ENCODE measurements at regions of chr13 and their contacts with region 1.

Region 1: DNA sequence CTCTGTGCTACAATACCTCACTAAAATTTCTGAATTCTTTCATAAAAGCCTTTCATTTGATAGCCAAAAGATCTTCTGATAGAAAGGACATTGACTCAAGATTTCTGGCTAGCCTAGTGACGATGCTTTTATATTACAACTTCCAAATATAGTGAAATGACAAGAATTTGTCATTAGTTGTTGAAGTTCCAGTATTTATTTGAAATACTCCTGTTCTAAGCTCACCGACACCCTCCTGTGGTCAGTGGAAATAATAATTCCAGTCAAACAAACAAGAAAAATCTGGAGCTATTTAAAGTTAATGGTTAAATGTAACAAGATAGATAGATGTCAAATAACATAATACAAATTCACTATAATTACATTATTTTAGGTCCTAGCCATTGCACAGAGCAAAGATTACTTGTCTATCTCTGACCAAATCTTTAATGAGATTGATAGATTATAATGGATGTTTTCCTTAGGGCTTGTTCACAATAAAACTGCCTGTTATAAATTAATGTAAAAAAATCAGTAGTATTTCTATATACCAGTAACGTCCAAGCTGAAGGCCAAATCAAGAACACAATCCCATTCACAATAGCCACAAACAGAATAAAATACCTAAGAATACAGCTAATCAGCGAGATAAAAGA is 195.5 kb downstream of the RGCC start:
- DNase-seq: peak; percentile 34
- H3K4me3 Mint-ChIP-seq: no peak overlapping the region
- H3K27ac Mint-ChIP-seq: no peak overlapping the region
- H3K4me1 Mint-ChIP-seq: peaks cover 8% of the 10 kb centered on the region
- H3K27me3 Mint-ChIP-seq: no peaks in the 10 kb centered on the region
- CTCF ChIP-seq: no peak

Region 2: GRCh38 chr13:41352935-41353840 is 299.7 kb before region 1 on chr13:
- CTCF ChIA-PET with region 1: interaction called, 10 read pairs
- intact Hi-C with region 1: no loop called
- DNase-seq: peak; percentile 24
- H3K4me3 Mint-ChIP-seq: no peak overlapping the region
- H3K27ac Mint-ChIP-seq: no peak overlapping the region
- H3K4me1 Mint-ChIP-seq: peaks cover 8% of the 10 kb centered on the region
- H3K27me3 Mint-ChIP-seq: no peaks in the 10 kb centered on the region
- CTCF ChIP-seq: no peak

Region 3: DNA sequence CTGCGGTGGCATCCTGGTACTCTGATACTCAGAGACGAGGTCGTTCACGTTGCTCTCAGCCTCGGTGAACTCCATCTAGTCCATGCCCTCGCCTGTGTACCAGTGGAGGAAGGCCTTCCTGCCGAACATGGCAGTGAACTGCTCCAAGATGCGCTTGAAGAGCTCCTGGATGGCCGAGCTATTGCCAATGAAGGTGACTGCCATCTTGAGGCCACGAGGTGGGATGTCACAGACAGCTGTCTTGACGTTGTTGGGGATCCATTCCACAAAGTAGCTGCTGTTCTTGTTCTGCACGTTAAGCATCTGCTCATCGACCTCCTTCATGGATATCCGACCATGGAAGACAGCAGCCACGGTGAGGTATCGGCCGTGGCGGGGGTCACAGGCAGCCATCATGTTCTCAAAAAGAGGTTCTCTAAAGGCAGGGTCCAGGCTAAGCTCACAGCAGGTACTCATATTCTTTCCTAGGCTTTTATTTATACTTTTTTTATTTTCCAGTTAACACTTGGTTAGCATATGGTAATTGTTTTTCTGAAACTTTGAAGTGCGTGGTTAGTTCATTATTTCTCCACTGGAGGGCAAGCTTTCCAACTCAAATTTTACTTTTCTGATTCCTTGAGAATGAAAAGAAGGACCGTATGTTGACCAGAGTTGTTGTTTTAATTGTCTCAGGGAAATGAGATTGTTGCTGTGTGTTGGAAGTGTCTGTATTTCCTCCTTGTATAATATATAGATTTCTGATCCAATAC is 267.9 kb before region 1 on chr13:
- CTCF ChIA-PET with region 1: no interaction called
- intact Hi-C with region 1: loop called (anchors 2 kb)
- DNase-seq: no peak
- H3K4me3 Mint-ChIP-seq: no peak overlapping the region
- H3K27ac Mint-ChIP-seq: no peak overlapping the region
- H3K4me1 Mint-ChIP-seq: no peaks in the 10 kb centered on the region
- H3K27me3 Mint-ChIP-seq: peaks cover 28% of the 10 kb centered on the region
- CTCF ChIP-seq: peak; percentile 22

Region 4: GRCh38 chr13:41411522-41411921 is 241.3 kb before region 1 on chr13:
- CTCF ChIA-PET with region 1: interaction called, 5 read pairs
- intact Hi-C with region 1: loop called (anchors 1 kb)
- DNase-seq: peak; percentile 28
- H3K4me3 Mint-ChIP-seq: no peak overlapping the region
- H3K27ac Mint-ChIP-seq: no peak overlapping the region
- H3K4me1 Mint-ChIP-seq: no peaks in the 10 kb centered on the region
- H3K27me3 Mint-ChIP-seq: no peaks in the 10 kb centered on the region
- CTCF ChIP-seq: no peak

Region 5: GRCh38 chr13:41456768-41457588 is 195.9 kb before region 1 on chr13 and contains the start of gene RGCC:
- CTCF ChIA-PET with region 1: interaction called, 11 read pairs
- intact Hi-C with region 1: loop called (anchors 5 kb)
- DNase-seq: peak; percentile 70
- H3K4me3 Mint-ChIP-seq: peak within 1 kb of the TSS; percentile 71
- H3K27ac Mint-ChIP-seq: no peak within 1 kb of the TSS
- H3K4me1 Mint-ChIP-seq: no peaks in the 10 kb centered on the region
- H3K27me3 Mint-ChIP-seq: no peaks in the 10 kb centered on the region
- CTCF ChIP-seq: no peak
- total RNA-seq, gene RGCC: 0.93 and 1.7 TPM in 2 replicates

Region 6: GRCh38 chr13:41596190-41596589 is 56.7 kb before region 1 on chr13:
- CTCF ChIA-PET with region 1: no interaction called
- intact Hi-C with region 1: loop called (anchors 5 kb)
- DNase-seq: no peak
- H3K4me3 Mint-ChIP-seq: no peak overlapping the region
- H3K27ac Mint-ChIP-seq: no peak overlapping the region
- H3K4me1 Mint-ChIP-seq: no peaks in the 10 kb centered on the region
- H3K27me3 Mint-ChIP-seq: no peaks in the 10 kb centered on the region
- CTCF ChIP-seq: no peak